K562 (cell line): ENCODE measurements at regions of chr1 and their contacts with region 1.

Region 1: GRCh38 chr1:201649761-201650622 is 111.1 kb downstream of the NAV1 start:
- DNase-seq: peak; percentile 72 to 90 (median 87)
- ATAC-seq: peak; percentile 71
- H3K4me3 ChIP-seq: peak overlapping the region; percentile 42
- H3K27ac ChIP-seq: no peak overlapping the region; the same call in 2 of the 3 replicates
- H3K4me1 ChIP-seq: peaks cover 26 to 33% of the 10 kb centered on the region in 2 experiments
- H3K27me3 ChIP-seq: peaks cover 0 to 10% of the 10 kb centered on the region in 2 experiments; a peak in 1 of 5 replicates
- CTCF ChIP-seq: no peak
- EP300 ChIP-seq: no peak
- POLR2A ChIP-seq: no peak; the same call in 1 of the 2 replicates
- RAD21 ChIP-seq: no peak

Region 2: DNA sequence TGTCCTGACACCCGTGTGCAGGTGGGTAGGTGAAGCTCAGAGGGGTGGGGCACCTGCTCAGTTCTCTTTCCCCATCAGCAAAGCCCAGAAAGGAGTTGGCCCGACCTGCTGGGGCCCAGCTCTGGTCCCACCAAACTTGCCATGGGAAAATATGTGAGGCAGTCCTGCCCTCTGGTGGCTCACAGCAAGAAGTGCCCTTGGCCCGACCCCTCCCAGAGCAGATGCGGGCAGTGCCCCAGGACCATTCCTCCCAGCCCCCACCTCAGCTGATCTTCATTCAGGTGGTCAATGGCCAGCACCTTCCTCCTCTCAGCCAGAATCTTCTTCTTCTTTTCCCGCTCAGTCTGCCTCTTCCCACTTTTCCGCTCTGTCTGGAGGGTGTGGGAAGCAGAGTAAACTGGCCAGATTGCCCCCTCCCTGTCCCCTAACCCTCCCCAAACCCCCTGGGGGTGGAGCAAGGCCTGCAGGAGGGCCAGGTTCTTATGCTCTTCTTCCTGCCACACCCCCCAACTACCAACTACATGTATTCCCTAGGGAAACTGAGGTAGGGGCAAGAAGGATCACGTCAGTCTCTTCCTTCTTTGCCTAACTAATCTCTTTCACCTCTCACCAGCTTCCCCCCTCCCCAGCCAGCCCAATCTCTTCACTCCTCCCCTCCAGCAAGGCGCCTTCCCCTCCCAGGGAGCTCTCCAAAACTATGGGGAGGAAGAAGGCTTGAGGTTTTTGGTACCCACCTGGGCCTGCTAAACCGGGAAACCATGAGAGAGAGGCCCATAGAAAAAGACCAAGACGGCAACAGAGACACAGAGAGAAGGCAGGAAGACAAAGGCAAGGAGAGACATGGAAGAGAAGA is 288.1 kb before region 1 on chr1:
- CTCF ChIA-PET with region 1: no interaction called
- POLR2A ChIA-PET with region 1: no interaction called
- in situ Hi-C with region 1: no loop called
- intact Hi-C with region 1: no loop called
- DNase-seq: peak; percentile 66 to 86 (median 84)
- ATAC-seq: peak; percentile 93
- H3K4me3 ChIP-seq: no peak overlapping the region
- H3K27ac ChIP-seq: no peak overlapping the region
- H3K4me1 ChIP-seq: peaks cover 0 to 3% of the 10 kb centered on the region in 2 experiments; a peak in 1 of 5 replicates
- H3K27me3 ChIP-seq: peaks cover 0 to 80% of the 10 kb centered on the region in 2 experiments; a peak in 2 of 5 replicates
- CTCF ChIP-seq: peak; percentile 86 to 91 (median 89)
- EP300 ChIP-seq: no peak
- POLR2A ChIP-seq: no peak
- RAD21 ChIP-seq: peak; percentile 87 to 92

Region 3: GRCh38 chr1:201637680-201638079 is 12.3 kb before region 1 on chr1:
- CTCF ChIA-PET with region 1: no interaction called
- POLR2A ChIA-PET with region 1: interaction called, 29 read pairs
- in situ Hi-C with region 1: no loop called
- intact Hi-C with region 1: no loop called
- DNase-seq: peak in 2 of 4 experiments; percentile 52
- ATAC-seq: no peak
- H3K4me3 ChIP-seq: no peak overlapping the region
- H3K27ac ChIP-seq: no peak overlapping the region
- H3K4me1 ChIP-seq: peaks cover 12 to 39% of the 10 kb centered on the region in 2 experiments; a peak in 4 of 5 replicates
- H3K27me3 ChIP-seq: no peaks in the 10 kb centered on the region
- CTCF ChIP-seq: no peak
- EP300 ChIP-seq: no peak
- POLR2A ChIP-seq: no peak
- RAD21 ChIP-seq: no peak

Region 4: GRCh38 chr1:201665036-201665435 is 15.0 kb after region 1 on chr1:
- CTCF ChIA-PET with region 1: no interaction called
- POLR2A ChIA-PET with region 1: interaction called, 10 read pairs
- in situ Hi-C with region 1: no loop called
- intact Hi-C with region 1: no loop called
- DNase-seq: no peak
- ATAC-seq: no peak
- H3K4me3 ChIP-seq: no peak overlapping the region
- H3K27ac ChIP-seq: no peak overlapping the region
- H3K4me1 ChIP-seq: no peaks in the 10 kb centered on the region
- H3K27me3 ChIP-seq: peaks cover 0 to 35% of the 10 kb centered on the region in 2 experiments; a peak in 2 of 5 replicates
- CTCF ChIP-seq: no peak
- EP300 ChIP-seq: no peak
- POLR2A ChIP-seq: no peak
- RAD21 ChIP-seq: no peak